ENCODE measurements at regions of chr1 and their contacts with region 1.

Region 1: DNA sequence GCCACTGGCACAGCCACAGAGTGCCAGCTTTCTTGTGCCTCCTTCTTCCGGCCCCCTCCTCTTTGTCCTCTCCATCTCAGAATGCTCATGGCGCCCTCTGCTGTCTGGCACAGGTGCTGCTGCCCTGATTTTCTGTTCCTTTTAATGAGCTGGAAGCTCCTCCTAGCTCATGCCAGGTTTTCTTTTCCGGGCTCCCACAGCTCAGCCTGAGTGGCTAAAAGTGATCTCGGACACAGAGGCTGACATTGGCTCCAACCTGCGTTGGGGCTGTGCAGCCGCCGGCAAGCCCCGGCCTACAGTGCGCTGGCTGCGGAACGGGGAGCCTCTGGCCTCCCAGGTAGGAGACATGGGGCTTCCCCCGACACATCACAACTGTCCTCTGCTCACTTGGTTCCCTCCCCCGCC is 18.7 kb downstream of the CNTN2 start:
- DNase-seq: no peak
- H3K4me3 ChIP-seq: no peak overlapping the region
- H3K27me3 ChIP-seq: no peaks in the 10 kb centered on the region; the same call in none of the 2 replicates
- CTCF ChIP-seq: peak; percentile 91

Region 2: GRCh38 chr1:204975570-204976235 is 86.0 kb before region 1 on chr1:
- CTCF ChIA-PET with region 1: interaction called, 30 read pairs
- POLR2A ChIA-PET with region 1: no interaction called
- DNase-seq: no peak
- H3K4me3 ChIP-seq: no peak overlapping the region
- H3K27me3 ChIP-seq: no peaks in the 10 kb centered on the region
- CTCF ChIP-seq: peak; percentile 87

Region 3: GRCh38 chr1:205013683-205014367 is 47.8 kb before region 1 on chr1:
- CTCF ChIA-PET with region 1: interaction called, 16 read pairs
- POLR2A ChIA-PET with region 1: no interaction called
- DNase-seq: no peak
- H3K4me3 ChIP-seq: no peak overlapping the region
- H3K27me3 ChIP-seq: no peaks in the 10 kb centered on the region; the same call in 1 of the 2 replicates
- CTCF ChIP-seq: no peak

Region 4: DNA sequence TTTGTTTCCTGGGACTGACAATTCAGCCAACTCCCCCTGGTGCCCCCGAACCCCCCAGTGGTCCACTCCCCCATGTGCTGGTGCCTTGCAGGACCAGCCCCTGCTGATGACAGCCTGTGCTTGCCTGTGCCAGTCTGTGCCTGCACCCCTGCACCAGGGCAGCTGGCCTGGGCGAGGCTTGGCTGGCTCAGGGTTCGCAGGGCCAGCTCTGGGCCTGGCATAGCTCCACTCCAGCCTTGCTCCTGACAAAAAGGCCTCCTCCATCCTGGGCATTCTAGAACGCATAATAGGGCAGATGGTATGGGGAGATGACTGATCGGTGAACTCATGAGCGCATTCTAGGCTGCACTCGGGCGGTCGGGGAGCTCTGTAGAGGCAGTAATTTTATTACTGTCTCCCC is 13.3 kb before region 1 on chr1:
- CTCF ChIA-PET with region 1: interaction called, 52 read pairs
- POLR2A ChIA-PET with region 1: no interaction called
- DNase-seq: no peak
- H3K4me3 ChIP-seq: no peak overlapping the region
- H3K27me3 ChIP-seq: peaks cover 41% of the 10 kb centered on the region
- CTCF ChIP-seq: no peak

Region 5: DNA sequence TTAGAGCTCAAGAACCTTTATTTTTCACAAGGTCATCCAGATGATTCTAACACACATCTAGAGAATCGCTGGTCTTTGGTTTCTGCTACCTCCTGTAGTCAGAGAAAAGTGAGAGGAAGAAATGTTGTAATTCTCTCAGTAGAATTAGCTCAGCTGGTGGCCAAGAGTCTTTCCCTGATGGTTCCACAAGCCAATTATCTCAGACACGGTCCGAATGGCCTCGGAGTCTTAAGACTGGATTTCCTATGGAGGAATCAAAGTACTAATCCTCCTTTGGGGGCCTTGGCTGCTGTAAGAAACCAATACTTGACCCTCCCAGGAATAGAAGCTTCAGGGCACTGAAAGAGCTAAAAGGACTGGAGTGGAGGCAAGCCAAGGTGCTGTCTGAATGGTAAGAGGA is 20.8 kb after region 1 on chr1:
- CTCF ChIA-PET with region 1: interaction called, 32 read pairs
- POLR2A ChIA-PET with region 1: no interaction called
- DNase-seq: no peak
- H3K4me3 ChIP-seq: no peak overlapping the region
- H3K27me3 ChIP-seq: no peaks in the 10 kb centered on the region
- CTCF ChIP-seq: no peak